Adrenal gland (tissue), 19 donors: ENCODE measurements at regions of chr20 and their contacts with region 1.

Region 1: GRCh38 chr20:24340933-24341332 is 128.5 kb upstream of the SYNDIG1 start:
- DNase-seq: no peak
- H3K4me3 ChIP-seq: no peak overlapping the region
- H3K27ac ChIP-seq: no peak overlapping the region
- H3K4me1 ChIP-seq: no peaks in the 10 kb centered on the region
- H3K27me3 ChIP-seq: no peaks in the 10 kb centered on the region
- CTCF ChIP-seq: no peak
- POLR2A ChIP-seq: no peak

Region 2: GRCh38 chr20:23988561-23988960 is 352.4 kb before region 1 on chr20 and contains the start of gene GGTLC1:
- intact Hi-C with region 1: loop called in 1 of 2 experiments (anchors 10 kb)
- DNase-seq: peak in 1 of 7 donors; percentile 29
- H3K4me3 ChIP-seq: no peak within 1 kb of the TSS
- H3K27ac ChIP-seq: no peak within 1 kb of the TSS
- H3K4me1 ChIP-seq: no peaks in the 10 kb centered on the region
- H3K27me3 ChIP-seq: no peaks in the 10 kb centered on the region
- CTCF ChIP-seq: no peak
- POLR2A ChIP-seq: no peak
- total RNA-seq, gene GGTLC1: 0.38 TPM in 1 of 9 donors, not detected in the others

Region 3: DNA sequence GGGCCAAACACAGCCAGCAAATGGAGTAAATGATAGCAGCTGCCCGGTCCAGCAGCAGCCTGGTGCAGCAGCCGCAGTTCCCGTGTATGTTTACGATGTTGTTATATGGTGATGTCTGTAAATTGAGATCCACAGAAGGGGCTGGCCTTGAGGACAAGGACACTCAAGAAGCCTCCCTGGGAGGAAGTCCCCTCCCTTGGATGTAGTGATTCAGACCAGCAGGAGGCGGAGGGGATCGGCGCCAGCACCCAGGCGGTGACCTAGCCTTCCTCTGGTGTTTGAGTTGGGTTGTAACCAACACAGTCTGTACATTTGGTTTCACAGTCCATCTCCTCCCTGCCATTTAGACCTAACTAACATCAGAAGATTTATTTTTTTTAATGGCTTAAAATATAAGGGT is 316.3 kb after region 1 on chr20:
- intact Hi-C with region 1: no loop called
- DNase-seq: peak in 2 of 7 donors; percentile 23 to 38
- H3K4me3 ChIP-seq: no peak overlapping the region
- H3K27ac ChIP-seq: no peak overlapping the region
- H3K4me1 ChIP-seq: no peaks in the 10 kb centered on the region
- H3K27me3 ChIP-seq: no peaks in the 10 kb centered on the region
- CTCF ChIP-seq: peak in 1 of 6 experiments; percentile 15
- POLR2A ChIP-seq: no peak